ENCODE measurements at regions of chr10 and their contacts with region 1.

Region 1: GRCh38 chr10:19209318-19209717 is 160.7 kb downstream of the MALRD1 start:
- DNase-seq: no peak
- ATAC-seq: no peak
- H3K4me3 ChIP-seq: no peak overlapping the region
- H3K27ac ChIP-seq: no peak overlapping the region
- H3K4me1 ChIP-seq: no peaks in the 10 kb centered on the region
- H3K27me3 ChIP-seq: no peaks in the 10 kb centered on the region
- CTCF ChIP-seq: no peak

Region 2: GRCh38 chr10:19220829-19221228 is 11.5 kb after region 1 on chr10:
- CTCF ChIA-PET with region 1: no interaction called
- POLR2A ChIA-PET with region 1: no interaction called
- in situ Hi-C with region 1: no loop called
- intact Hi-C with region 1: no loop called
- DNase-seq: no peak
- ATAC-seq: no peak
- H3K4me3 ChIP-seq: no peak overlapping the region
- H3K27ac ChIP-seq: no peak overlapping the region
- H3K4me1 ChIP-seq: no peaks in the 10 kb centered on the region
- H3K27me3 ChIP-seq: no peaks in the 10 kb centered on the region
- CTCF ChIP-seq: no peak

Region 3: DNA sequence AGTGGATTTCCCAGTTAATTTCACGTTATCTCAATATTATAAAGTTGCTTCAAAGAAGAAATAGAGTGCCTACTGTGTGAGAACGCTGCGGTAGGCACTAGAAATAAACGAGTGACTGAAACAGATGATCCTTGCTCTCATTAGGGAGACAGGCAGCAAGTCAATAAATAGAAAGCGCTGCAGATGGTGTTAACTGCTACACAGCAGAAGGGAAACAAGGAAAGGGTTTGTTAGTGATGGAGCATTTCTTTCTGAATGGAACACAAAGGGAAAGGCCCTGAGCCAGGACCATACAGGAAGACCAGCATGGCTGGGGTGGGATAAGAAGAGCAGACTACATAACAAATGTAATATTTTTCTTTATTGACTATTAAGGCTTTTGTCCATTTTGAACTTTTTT is 74.5 kb after region 1 on chr10:
- CTCF ChIA-PET with region 1: no interaction called
- POLR2A ChIA-PET with region 1: interaction called, 22 read pairs
- in situ Hi-C with region 1: no loop called
- intact Hi-C with region 1: no loop called
- DNase-seq: no peak
- ATAC-seq: no peak
- H3K4me3 ChIP-seq: no peak overlapping the region
- H3K27ac ChIP-seq: no peak overlapping the region
- H3K4me1 ChIP-seq: no peaks in the 10 kb centered on the region
- H3K27me3 ChIP-seq: no peaks in the 10 kb centered on the region
- CTCF ChIP-seq: no peak